ENCODE measurements at regions of chr13 and their contacts with region 1.

Region 1: DNA sequence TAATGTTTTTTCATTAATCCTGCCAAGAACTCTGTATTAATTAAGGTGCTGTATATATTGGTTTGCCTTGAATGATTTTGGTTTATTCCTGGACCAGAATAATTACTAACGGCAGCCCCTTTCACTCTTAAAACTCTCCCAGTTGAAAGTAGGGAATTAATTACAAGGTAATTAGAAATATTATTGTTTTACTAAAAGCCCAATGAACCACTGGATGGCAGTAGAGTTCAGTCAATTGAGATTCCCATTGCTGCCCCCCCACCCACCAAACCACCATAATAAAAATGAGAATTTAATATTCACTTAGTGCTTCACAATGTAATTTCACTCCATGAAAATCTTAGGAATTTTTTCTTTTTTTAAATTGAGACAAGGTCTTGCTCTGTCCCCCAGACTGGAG is 13.7 kb downstream of the WBP4 start:
- DNase-seq: peak; percentile 40
- ATAC-seq: peak; percentile 45
- H3K4me3 Mint-ChIP-seq: no peak overlapping the region
- H3K27ac Mint-ChIP-seq: no peak overlapping the region
- H3K4me1 Mint-ChIP-seq: no peaks in the 10 kb centered on the region
- H3K27me3 Mint-ChIP-seq: no peaks in the 10 kb centered on the region
- CTCF ChIP-seq: peak; percentile 54

Region 2: GRCh38 chr13:40897058-40897457 is 178.0 kb before region 1 on chr13:
- CTCF ChIA-PET with region 1: no interaction called
- POLR2A ChIA-PET with region 1: no interaction called
- intact Hi-C with region 1: no loop called
- DNase-seq: no peak
- ATAC-seq: no peak
- H3K4me3 Mint-ChIP-seq: no peak overlapping the region
- H3K27ac Mint-ChIP-seq: no peak overlapping the region
- H3K4me1 Mint-ChIP-seq: peaks cover 5% of the 10 kb centered on the region
- H3K27me3 Mint-ChIP-seq: no peaks in the 10 kb centered on the region
- CTCF ChIP-seq: no peak

Region 3: GRCh38 chr13:41085961-41086585 is 11.0 kb after region 1 on chr13:
- CTCF ChIA-PET with region 1: interaction called, 13 read pairs
- POLR2A ChIA-PET with region 1: interaction called, 4 read pairs
- intact Hi-C with region 1: no loop called
- DNase-seq: no peak
- ATAC-seq: no peak
- H3K4me3 Mint-ChIP-seq: no peak overlapping the region
- H3K27ac Mint-ChIP-seq: no peak overlapping the region
- H3K4me1 Mint-ChIP-seq: no peaks in the 10 kb centered on the region
- H3K27me3 Mint-ChIP-seq: no peaks in the 10 kb centered on the region
- CTCF ChIP-seq: no peak

Region 4: GRCh38 chr13:41101866-41102265 is 26.8 kb after region 1 on chr13:
- CTCF ChIA-PET with region 1: no interaction called
- POLR2A ChIA-PET with region 1: no interaction called
- intact Hi-C with region 1: no loop called
- DNase-seq: no peak
- ATAC-seq: no peak
- H3K4me3 Mint-ChIP-seq: no peak overlapping the region
- H3K27ac Mint-ChIP-seq: no peak overlapping the region
- H3K4me1 Mint-ChIP-seq: no peaks in the 10 kb centered on the region
- H3K27me3 Mint-ChIP-seq: no peaks in the 10 kb centered on the region
- CTCF ChIP-seq: no peak

Region 5: GRCh38 chr13:41222259-41222852 is 147.3 kb after region 1 on chr13:
- CTCF ChIA-PET with region 1: interaction called, 16 read pairs
- POLR2A ChIA-PET with region 1: no interaction called
- intact Hi-C with region 1: loop called (anchors 5 kb)
- DNase-seq: peak; percentile 76
- ATAC-seq: peak; percentile 100
- H3K4me3 Mint-ChIP-seq: no peak overlapping the region
- H3K27ac Mint-ChIP-seq: no peak overlapping the region
- H3K4me1 Mint-ChIP-seq: peaks cover 2% of the 10 kb centered on the region
- H3K27me3 Mint-ChIP-seq: no peaks in the 10 kb centered on the region
- CTCF ChIP-seq: peak; percentile 78

Measured in activated CD8-positive, alpha-beta T cell treated with anti-CD3 and anti-CD28 coated beads for 36 hours (primary cell).